Motor neuron (in vitro differentiated cells): ENCODE measurements at regions of chr12 and their contacts with region 1.

Region 1: GRCh38 chr12:32198555-32198954 is 91.9 kb downstream of the BICD1 start:
- ATAC-seq: no peak
- H3K4me3 ChIP-seq: no peak overlapping the region
- H3K27ac ChIP-seq: no peak overlapping the region
- H3K4me1 ChIP-seq: no peaks in the 10 kb centered on the region

Region 2: GRCh38 chr12:32083489-32083888 is 115.1 kb before region 1 on chr12:
- in situ Hi-C with region 1: loop called in 1 of 9 experiments (anchors 25 kb)
- ATAC-seq: peak in 2 of 8 experiments; percentile 62 to 80
- H3K4me3 ChIP-seq: no peak overlapping the region
- H3K27ac ChIP-seq: no peak overlapping the region
- H3K4me1 ChIP-seq: no peaks in the 10 kb centered on the region